ENCODE measurements at regions of chr1 and their contacts with region 1.

Region 1: GRCh38 chr1:211579434-211580302 is 707 bp upstream of the SLC30A1 start:
- DNase-seq: peak in 1 of 2 donors; percentile 83
- H3K4me3 ChIP-seq: peak overlapping the region; percentile 76 to 99 (median 90)
- H3K27ac ChIP-seq: peak overlapping the region; percentile 84 to 98 (median 97)
- H3K4me1 ChIP-seq: peaks cover 8 to 53% (median 32%) of the 10 kb centered on the region in 4 donors
- H3K27me3 ChIP-seq: no peaks in the 10 kb centered on the region
- CTCF ChIP-seq: no peak
- EP300 ChIP-seq: no peak
- POLR2A ChIP-seq: no peak

Region 2: GRCh38 chr1:211654838-211655787 is 75.4 kb after region 1 on chr1:
- intact Hi-C with region 1: loop called (anchors 10 kb)
- DNase-seq: peak; percentile 92 to 96
- H3K4me3 ChIP-seq: no peak overlapping the region
- H3K27ac ChIP-seq: no peak overlapping the region
- H3K4me1 ChIP-seq: peaks cover 0 to 7% (median 6%) of the 10 kb centered on the region in 4 donors
- H3K27me3 ChIP-seq: peaks cover 0 to 13% (median 0%) of the 10 kb centered on the region in 3 donors
- CTCF ChIP-seq: peak in 5 of 7 experiments; percentile 65 to 88 (median 87)
- EP300 ChIP-seq: no peak
- POLR2A ChIP-seq: no peak

Region 3: GRCh38 chr1:211761400-211761799 is 181.7 kb after region 1 on chr1:
- intact Hi-C with region 1: no loop called
- DNase-seq: no peak
- H3K4me3 ChIP-seq: no peak overlapping the region
- H3K27ac ChIP-seq: no peak overlapping the region
- H3K4me1 ChIP-seq: no peaks in the 10 kb centered on the region
- H3K27me3 ChIP-seq: no peaks in the 10 kb centered on the region
- CTCF ChIP-seq: no peak
- EP300 ChIP-seq: no peak
- POLR2A ChIP-seq: no peak